ENCODE measurements at regions of chr14 and their contacts with region 1.

Region 1: GRCh38 chr14:64209444-64210131 is 84.6 kb downstream of the ESR2 start:
- DNase-seq: peak; percentile 83
- ATAC-seq: peak; percentile 90
- H3K4me3 ChIP-seq: no peak overlapping the region
- H3K4me3 Mint-ChIP-seq: peak overlapping the region; percentile 79
- H3K27ac ChIP-seq: peak overlapping the region; percentile 46 to 62
- H3K27ac Mint-ChIP-seq: peak overlapping the region; percentile 93
- H3K4me1 ChIP-seq: peaks cover 34 to 35% of the 10 kb centered on the region in 2 donors
- H3K4me1 Mint-ChIP-seq: peaks cover 38% of the 10 kb centered on the region
- H3K27me3 ChIP-seq: no peaks in the 10 kb centered on the region
- H3K27me3 Mint-ChIP-seq: no peaks in the 10 kb centered on the region
- CTCF ChIP-seq: no peak

Region 2: GRCh38 chr14:63510538-63510937 is 699.0 kb before region 1 on chr14:
- CTCF ChIA-PET with region 1: no interaction called
- POLR2A ChIA-PET with region 1: no interaction called
- intact Hi-C with region 1: no loop called
- DNase-seq: no peak
- ATAC-seq: peak; percentile 21
- H3K4me3 ChIP-seq: no peak overlapping the region
- H3K4me3 Mint-ChIP-seq: peak overlapping the region; percentile 4
- H3K27ac ChIP-seq: peak overlapping the region in 1 of 2 donors; percentile 10
- H3K27ac Mint-ChIP-seq: peak overlapping the region; percentile 27
- H3K4me1 ChIP-seq: peaks cover 13 to 15% of the 10 kb centered on the region in 2 donors
- H3K4me1 Mint-ChIP-seq: peaks cover 51% of the 10 kb centered on the region
- H3K27me3 ChIP-seq: no peaks in the 10 kb centered on the region
- H3K27me3 Mint-ChIP-seq: no peaks in the 10 kb centered on the region
- CTCF ChIP-seq: no peak

Region 3: GRCh38 chr14:64137657-64138290 is 71.8 kb before region 1 on chr14:
- CTCF ChIA-PET with region 1: interaction called, 11 read pairs
- POLR2A ChIA-PET with region 1: interaction called, 8 read pairs
- intact Hi-C with region 1: no loop called
- DNase-seq: peak; percentile 33
- ATAC-seq: no peak
- H3K4me3 ChIP-seq: no peak overlapping the region
- H3K4me3 Mint-ChIP-seq: no peak overlapping the region
- H3K27ac ChIP-seq: no peak overlapping the region
- H3K27ac Mint-ChIP-seq: no peak overlapping the region
- H3K4me1 ChIP-seq: no peaks in the 10 kb centered on the region
- H3K4me1 Mint-ChIP-seq: no peaks in the 10 kb centered on the region
- H3K27me3 ChIP-seq: no peaks in the 10 kb centered on the region
- H3K27me3 Mint-ChIP-seq: no peaks in the 10 kb centered on the region
- CTCF ChIP-seq: no peak

Region 4: GRCh38 chr14:64170181-64170580 is 39.4 kb before region 1 on chr14:
- CTCF ChIA-PET with region 1: interaction called, 4 read pairs
- POLR2A ChIA-PET with region 1: no interaction called
- intact Hi-C with region 1: loop called (anchors 5 kb)
- DNase-seq: peak; percentile 71
- ATAC-seq: peak; percentile 92
- H3K4me3 ChIP-seq: no peak overlapping the region
- H3K4me3 Mint-ChIP-seq: peak overlapping the region; percentile 32
- H3K27ac ChIP-seq: no peak overlapping the region
- H3K27ac Mint-ChIP-seq: peak overlapping the region; percentile 54
- H3K4me1 ChIP-seq: peaks cover 6 to 7% of the 10 kb centered on the region in 2 donors
- H3K4me1 Mint-ChIP-seq: peaks cover 15% of the 10 kb centered on the region
- H3K27me3 ChIP-seq: no peaks in the 10 kb centered on the region
- H3K27me3 Mint-ChIP-seq: no peaks in the 10 kb centered on the region
- CTCF ChIP-seq: no peak

Region 5: DNA sequence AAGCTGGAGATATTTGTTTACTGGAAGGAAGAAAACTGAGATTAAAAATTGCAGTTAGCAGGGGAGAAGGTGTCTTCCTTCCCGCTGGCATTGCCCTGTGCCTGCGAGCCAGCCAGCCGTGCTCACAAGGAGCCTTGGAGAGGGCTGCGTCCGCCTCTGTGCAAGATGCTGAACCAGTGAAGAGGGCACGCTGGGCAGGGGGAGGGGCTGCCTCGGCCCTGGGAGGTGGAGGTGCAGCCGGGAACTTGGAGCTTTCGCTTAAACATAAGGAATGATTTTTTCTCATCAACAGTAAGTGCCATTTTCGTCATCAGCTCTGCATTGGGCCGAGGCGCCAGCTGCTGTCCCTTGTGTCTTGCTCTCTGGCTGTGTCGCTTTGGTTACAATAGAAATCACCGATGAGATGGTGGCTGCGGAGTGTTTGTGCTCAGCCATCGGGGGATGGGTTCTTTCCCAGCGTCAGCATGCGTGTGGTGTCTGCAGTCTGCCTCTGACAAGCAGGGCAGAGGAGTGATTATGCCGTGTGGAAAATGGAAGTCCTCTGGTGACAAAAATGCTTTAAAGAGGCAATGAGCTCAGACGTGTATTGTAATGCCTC is 12.7 kb before region 1 on chr14:
- CTCF ChIA-PET with region 1: interaction called, 11 read pairs
- POLR2A ChIA-PET with region 1: interaction called, 13 read pairs
- intact Hi-C with region 1: loop called (anchors 1 kb)
- DNase-seq: peak; percentile 84
- ATAC-seq: peak; percentile 82
- H3K4me3 ChIP-seq: peak overlapping the region in 4 of 5 experiments; percentile 40 to 53 (median 46)
- H3K4me3 Mint-ChIP-seq: peak overlapping the region; percentile 90
- H3K27ac ChIP-seq: peak overlapping the region; percentile 94 to 98
- H3K27ac Mint-ChIP-seq: peak overlapping the region; percentile 94
- H3K4me1 ChIP-seq: peaks cover 51 to 53% of the 10 kb centered on the region in 2 donors
- H3K4me1 Mint-ChIP-seq: peaks cover 57% of the 10 kb centered on the region
- H3K27me3 ChIP-seq: no peaks in the 10 kb centered on the region
- H3K27me3 Mint-ChIP-seq: no peaks in the 10 kb centered on the region
- CTCF ChIP-seq: no peak

Region 6: DNA sequence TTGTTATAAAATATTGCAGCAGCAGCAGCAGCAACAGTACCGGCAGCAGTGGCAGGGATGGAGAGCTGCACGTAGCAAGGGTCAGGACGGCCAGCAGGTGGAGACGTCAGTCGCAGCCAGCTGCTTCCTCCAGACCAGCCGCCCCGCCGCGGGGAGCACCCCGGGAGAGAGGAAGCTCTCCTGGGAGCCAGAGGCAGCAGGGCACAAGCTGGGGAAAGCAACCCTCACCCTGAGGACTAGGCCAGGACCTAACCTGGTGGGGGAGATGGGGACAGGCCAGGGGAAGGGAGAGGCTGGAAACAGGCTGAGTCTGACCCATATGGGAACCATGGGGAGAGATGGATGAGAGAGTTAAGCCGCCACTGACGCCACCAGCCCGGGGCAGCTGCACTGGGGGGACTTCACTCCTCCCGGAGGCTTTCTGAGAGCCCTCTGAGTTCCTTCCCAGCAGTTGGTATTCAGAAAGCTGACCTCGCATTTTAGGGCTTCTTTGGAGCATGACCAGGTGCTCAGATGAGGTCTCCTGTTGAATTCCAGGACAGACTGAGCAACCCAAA is 613.8 kb after region 1 on chr14:
- CTCF ChIA-PET with region 1: no interaction called
- POLR2A ChIA-PET with region 1: no interaction called
- intact Hi-C with region 1: no loop called
- DNase-seq: peak; percentile 67
- ATAC-seq: peak; percentile 78
- H3K4me3 ChIP-seq: no peak overlapping the region
- H3K4me3 Mint-ChIP-seq: no peak overlapping the region
- H3K27ac ChIP-seq: no peak overlapping the region
- H3K27ac Mint-ChIP-seq: no peak overlapping the region
- H3K4me1 ChIP-seq: peaks cover 6 to 7% of the 10 kb centered on the region in 2 donors
- H3K4me1 Mint-ChIP-seq: peaks cover 6% of the 10 kb centered on the region
- H3K27me3 ChIP-seq: peaks cover 0 to 15% (median 3%) of the 10 kb centered on the region in 4 experiments
- H3K27me3 Mint-ChIP-seq: peaks cover 54% of the 10 kb centered on the region
- CTCF ChIP-seq: peak; percentile 71

Measured in B cell (primary cell).